Naive thymus-derived CD4-positive, alpha-beta T cell (primary cell): ENCODE measurements at regions of chr5 and their contacts with region 1.

Region 1: GRCh38 chr5:157594257-157594656 is 18.7 kb upstream of the ADAM19 start:
- DNase-seq: no peak
- ATAC-seq: no peak
- H3K4me3 ChIP-seq: no peak overlapping the region
- H3K4me3 Mint-ChIP-seq: peak overlapping the region in 1 of 10 donors; percentile 60
- H3K27ac ChIP-seq: no peak overlapping the region
- H3K27ac Mint-ChIP-seq: peak overlapping the region in 1 of 9 donors; percentile 85
- H3K4me1 ChIP-seq: peaks cover 5 to 35% of the 10 kb centered on the region in 2 donors
- H3K4me1 Mint-ChIP-seq: peaks cover 11 to 77% (median 24%) of the 10 kb centered on the region in 7 donors
- H3K27me3 ChIP-seq: no peaks in the 10 kb centered on the region
- H3K27me3 Mint-ChIP-seq: peaks cover 0 to 6% (median 0%) of the 10 kb centered on the region in 5 donors

Region 2: GRCh38 chr5:157582731-157583620 is 11.3 kb before region 1 on chr5:
- CTCF ChIA-PET with region 1: no interaction called
- POLR2A ChIA-PET with region 1: no interaction called
- intact Hi-C with region 1: loop called in 1 of 2 experiments (anchors 1 kb)
- DNase-seq: no peak
- ATAC-seq: peak; percentile 6
- H3K4me3 ChIP-seq: no peak overlapping the region
- H3K4me3 Mint-ChIP-seq: peak overlapping the region in 1 of 10 donors; percentile 55
- H3K27ac ChIP-seq: no peak overlapping the region
- H3K27ac Mint-ChIP-seq: peak overlapping the region in 1 of 9 donors; percentile 75
- H3K4me1 ChIP-seq: peaks cover 0 to 6% of the 10 kb centered on the region in 2 donors
- H3K4me1 Mint-ChIP-seq: peaks cover 0 to 69% (median 0%) of the 10 kb centered on the region in 7 donors
- H3K27me3 ChIP-seq: no peaks in the 10 kb centered on the region
- H3K27me3 Mint-ChIP-seq: no peaks in the 10 kb centered on the region